ENCODE measurements at regions of chr11 and their contacts with region 1.

Region 1: GRCh38 chr11:62108017-62108750 is 15.6 kb upstream of the INCENP start:
- DNase-seq: peak; percentile 56
- H3K4me3 Mint-ChIP-seq: no peak overlapping the region
- H3K27ac Mint-ChIP-seq: no peak overlapping the region
- H3K4me1 Mint-ChIP-seq: peaks cover 24% of the 10 kb centered on the region
- H3K27me3 Mint-ChIP-seq: peaks cover 19% of the 10 kb centered on the region

Region 2: DNA sequence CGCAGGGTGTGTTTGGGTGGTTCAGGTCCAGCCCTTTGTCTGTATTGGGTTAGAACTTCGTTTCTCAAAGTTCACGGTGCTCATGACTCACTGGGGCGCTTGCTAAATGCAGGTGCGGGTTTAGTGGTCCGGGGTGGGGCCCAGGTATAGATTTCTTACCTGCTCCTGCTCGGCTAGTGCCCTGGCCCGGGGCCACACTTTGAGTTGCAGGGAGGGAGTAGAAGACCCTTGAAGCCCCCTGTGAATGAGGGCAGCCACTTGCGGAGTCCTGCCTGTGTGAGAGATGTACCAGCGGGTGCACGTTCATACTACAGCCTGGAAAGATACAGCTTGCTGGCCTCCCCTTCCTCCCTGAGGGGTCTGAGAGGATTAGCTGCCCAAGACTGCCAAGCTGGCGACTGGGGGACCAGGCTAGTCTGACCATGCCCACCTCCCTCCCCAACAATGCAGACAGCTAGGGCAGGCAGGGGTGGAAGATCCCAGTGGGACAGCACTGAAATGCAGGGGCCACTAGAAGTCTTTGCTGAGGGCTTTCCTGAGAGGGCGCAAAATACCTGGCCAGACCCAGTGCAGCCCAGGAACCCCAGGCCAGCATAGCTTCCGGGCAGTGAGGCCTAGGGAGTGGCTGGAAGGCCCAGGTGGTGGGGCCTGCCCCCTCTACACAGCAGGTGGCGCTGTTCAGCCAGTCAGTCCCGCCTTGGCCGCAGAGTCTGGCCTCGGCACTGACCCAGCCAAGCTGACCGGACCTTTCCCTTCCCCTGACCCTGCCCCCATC is 360.8 kb before region 1 on chr11:
- CTCF ChIA-PET with region 1: interaction called, 12 read pairs
- DNase-seq: peak; percentile 68
- H3K4me3 Mint-ChIP-seq: no peak overlapping the region
- H3K27ac Mint-ChIP-seq: no peak overlapping the region
- H3K4me1 Mint-ChIP-seq: peaks cover 2% of the 10 kb centered on the region
- H3K27me3 Mint-ChIP-seq: peaks cover 42% of the 10 kb centered on the region

Region 3: DNA sequence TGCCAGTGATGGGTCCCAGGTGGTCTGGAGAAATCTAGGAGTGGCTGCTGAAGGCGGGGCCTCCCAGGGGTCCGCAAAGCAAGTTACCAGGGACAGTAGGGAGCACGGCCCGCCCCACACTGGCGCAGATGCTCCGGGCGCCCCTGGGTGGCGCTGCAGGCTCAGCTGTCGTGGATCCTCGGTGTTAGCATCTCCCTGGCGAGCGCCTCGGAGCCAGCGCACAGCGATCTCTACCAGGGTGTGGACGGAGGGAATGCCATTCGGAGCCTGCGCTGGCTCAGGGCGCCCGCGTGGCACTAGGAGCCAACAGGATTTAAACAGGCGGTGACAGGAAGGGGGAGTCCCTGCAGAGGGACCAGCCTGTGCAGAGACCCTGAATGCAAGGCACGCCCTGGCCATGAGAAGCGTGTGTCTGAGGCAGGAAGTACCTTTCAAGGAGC is 237.0 kb before region 1 on chr11:
- CTCF ChIA-PET with region 1: interaction called, 31 read pairs
- DNase-seq: peak; percentile 78
- H3K4me3 Mint-ChIP-seq: peak overlapping the region; percentile 55
- H3K27ac Mint-ChIP-seq: no peak overlapping the region
- H3K4me1 Mint-ChIP-seq: peaks cover 3% of the 10 kb centered on the region
- H3K27me3 Mint-ChIP-seq: peaks cover 39% of the 10 kb centered on the region

Region 4: GRCh38 chr11:61899146-61899841 is 208.9 kb before region 1 on chr11:
- CTCF ChIA-PET with region 1: interaction called, 116 read pairs
- DNase-seq: peak; percentile 94
- H3K4me3 Mint-ChIP-seq: no peak overlapping the region
- H3K27ac Mint-ChIP-seq: peak overlapping the region; percentile 19
- H3K4me1 Mint-ChIP-seq: peaks cover 6% of the 10 kb centered on the region
- H3K27me3 Mint-ChIP-seq: peaks cover 16% of the 10 kb centered on the region

Region 5: DNA sequence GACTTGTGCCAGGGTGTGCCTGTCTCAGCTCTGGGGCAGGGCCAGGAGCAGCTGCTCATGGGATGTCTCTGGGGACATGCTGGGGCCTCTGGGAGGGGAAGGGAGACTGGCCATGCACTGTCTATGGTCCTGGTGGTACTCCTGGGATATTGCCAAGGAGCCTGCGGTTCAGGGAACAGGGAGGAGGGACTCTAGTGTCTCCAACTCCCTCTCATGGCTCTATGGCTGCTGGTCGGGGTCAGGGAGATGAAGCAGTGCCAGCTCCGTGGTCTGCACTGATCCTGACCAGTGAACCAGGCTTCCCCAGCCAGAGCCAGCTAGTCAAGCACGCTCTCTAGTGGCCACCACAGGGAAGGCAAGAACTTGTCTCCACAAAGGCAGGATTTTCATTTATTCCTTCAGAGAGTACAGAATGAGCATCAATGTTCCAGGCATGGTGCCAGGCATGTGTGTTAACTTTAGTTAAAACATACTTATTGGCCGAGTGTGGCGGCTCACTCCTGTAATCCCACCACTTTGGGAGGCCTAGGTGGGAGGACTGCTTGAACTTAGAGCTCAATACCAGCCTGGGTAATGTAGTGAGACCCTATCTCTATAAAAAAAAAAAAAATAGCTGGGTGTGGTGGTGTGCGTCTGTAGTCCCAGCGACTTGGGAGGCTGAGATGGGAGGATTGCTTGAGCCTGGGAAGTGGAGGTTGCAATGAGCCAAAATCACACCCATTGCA is 160.5 kb before region 1 on chr11:
- CTCF ChIA-PET with region 1: interaction called, 34 read pairs
- DNase-seq: peak; percentile 82
- H3K4me3 Mint-ChIP-seq: no peak overlapping the region
- H3K27ac Mint-ChIP-seq: no peak overlapping the region
- H3K4me1 Mint-ChIP-seq: no peaks in the 10 kb centered on the region
- H3K27me3 Mint-ChIP-seq: peaks cover 26% of the 10 kb centered on the region

Region 6: GRCh38 chr11:62088331-62088933 is 19.8 kb before region 1 on chr11:
- CTCF ChIA-PET with region 1: interaction called, 113 read pairs
- DNase-seq: no peak
- H3K4me3 Mint-ChIP-seq: no peak overlapping the region
- H3K27ac Mint-ChIP-seq: no peak overlapping the region
- H3K4me1 Mint-ChIP-seq: no peaks in the 10 kb centered on the region
- H3K27me3 Mint-ChIP-seq: peaks cover 9% of the 10 kb centered on the region

Region 7: GRCh38 chr11:62333768-62334167 is 225.6 kb after region 1 on chr11:
- CTCF ChIA-PET with region 1: no interaction called
- DNase-seq: no peak
- H3K4me3 Mint-ChIP-seq: no peak overlapping the region
- H3K27ac Mint-ChIP-seq: no peak overlapping the region
- H3K4me1 Mint-ChIP-seq: peaks cover 19% of the 10 kb centered on the region
- H3K27me3 Mint-ChIP-seq: peaks cover 79% of the 10 kb centered on the region